ENCODE measurements at regions of chr9 and their contacts with region 1.

Region 1: GRCh38 chr9:128818099-128818838 is at the start of gene ENDOG:
- DNase-seq: peak; percentile 94 to 98 (median 97)
- ATAC-seq: peak; percentile 90 to 94
- H3K4me3 Mint-ChIP-seq: peak within 1 kb of the TSS; percentile 83 to 93 (median 90)
- H3K27ac Mint-ChIP-seq: peak within 1 kb of the TSS; percentile 59 to 94 (median 92)
- H3K4me1 Mint-ChIP-seq: peaks cover 6 to 26% (median 23%) of the 10 kb centered on the region in 4 donors
- H3K27me3 Mint-ChIP-seq: no peaks in the 10 kb centered on the region
- polyA plus RNA-seq, gene ENDOG: 16.3 to 34.0 (median 19.0) TPM

Region 2: GRCh38 chr9:128771745-128772519 is 46.3 kb before region 1 on chr9 and contains the start of gene ZER1:
- POLR2A ChIA-PET with region 1: interaction called, 11 read pairs
- DNase-seq: peak; percentile 88 to 96 (median 94)
- ATAC-seq: peak; percentile 89 to 91
- H3K4me3 Mint-ChIP-seq: peak within 1 kb of the TSS; percentile 94 to 99 (median 97)
- H3K27ac Mint-ChIP-seq: peak within 1 kb of the TSS; percentile 90 to 100 (median 99)
- H3K4me1 Mint-ChIP-seq: peaks cover 20 to 43% (median 34%) of the 10 kb centered on the region in 4 donors
- H3K27me3 Mint-ChIP-seq: no peaks in the 10 kb centered on the region
- polyA plus RNA-seq, gene ZER1: 34.7 to 46.9 (median 45.7) TPM

Region 3: DNA sequence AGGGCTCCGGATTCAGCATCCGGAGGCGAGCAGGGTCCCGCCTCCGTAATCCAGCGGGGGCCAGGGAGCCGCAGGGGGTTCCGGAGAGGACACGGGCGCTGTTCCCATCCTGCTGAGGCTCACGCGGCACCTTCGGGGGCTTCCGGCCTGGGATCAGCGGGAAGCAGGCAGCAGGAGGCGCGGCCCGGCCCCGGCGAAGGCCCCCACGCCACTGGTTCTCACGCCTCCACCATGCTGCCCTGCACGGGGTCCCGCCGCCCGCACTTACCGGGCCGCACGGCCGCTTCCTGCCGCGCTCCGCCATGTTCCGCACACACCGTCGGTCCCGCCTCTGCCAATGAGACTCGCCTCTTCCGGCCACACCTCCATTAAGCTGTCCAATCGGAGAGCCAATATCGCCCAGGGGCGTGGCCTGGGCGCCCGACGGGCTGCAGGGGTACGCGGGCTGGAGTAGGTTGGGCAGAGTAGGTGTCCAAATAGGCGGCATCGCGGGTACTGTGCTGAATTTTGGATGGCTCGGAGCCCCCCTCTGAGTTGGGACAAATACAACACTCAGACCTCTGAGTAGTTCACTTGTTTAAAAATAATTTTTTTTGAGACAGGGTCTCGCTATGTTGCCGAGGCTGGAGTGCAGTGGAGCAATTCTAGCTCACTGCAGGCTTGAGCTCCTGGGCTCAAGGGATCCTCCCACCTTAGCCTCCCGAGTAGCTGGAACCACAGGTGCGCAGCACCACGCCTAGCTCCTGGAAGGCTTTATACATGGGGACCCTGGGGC is 11.4 kb after region 1 on chr9 and contains the start of gene SPOUT1:
- POLR2A ChIA-PET with region 1: interaction called, 38 read pairs
- DNase-seq: peak; percentile 87 to 96 (median 92)
- ATAC-seq: peak; percentile 95 to 99
- H3K4me3 Mint-ChIP-seq: peak within 1 kb of the TSS; percentile 84 to 96 (median 94)
- H3K27ac Mint-ChIP-seq: peak within 1 kb of the TSS; percentile 86 to 98 (median 94)
- H3K4me1 Mint-ChIP-seq: peaks cover 11 to 32% (median 26%) of the 10 kb centered on the region in 4 donors
- H3K27me3 Mint-ChIP-seq: no peaks in the 10 kb centered on the region
- polyA plus RNA-seq, gene SPOUT1: 46.7 to 55.6 (median 50.0) TPM

Region 4: GRCh38 chr9:129968690-129969501 is 1150.6 kb after region 1 on chr9:
- POLR2A ChIA-PET with region 1: no interaction called
- DNase-seq: no peak
- ATAC-seq: no peak
- H3K4me3 Mint-ChIP-seq: no peak overlapping the region
- H3K27ac Mint-ChIP-seq: peak overlapping the region in 9 of 10 donors; percentile 52 to 98 (median 67)
- H3K4me1 Mint-ChIP-seq: peaks cover 20 to 60% (median 43%) of the 10 kb centered on the region in 4 donors
- H3K27me3 Mint-ChIP-seq: no peaks in the 10 kb centered on the region

Measured in naive thymus-derived CD8-positive, alpha-beta T cell (primary cell).